ENCODE measurements at regions of chr19 and their contacts with region 1.

Region 1: DNA sequence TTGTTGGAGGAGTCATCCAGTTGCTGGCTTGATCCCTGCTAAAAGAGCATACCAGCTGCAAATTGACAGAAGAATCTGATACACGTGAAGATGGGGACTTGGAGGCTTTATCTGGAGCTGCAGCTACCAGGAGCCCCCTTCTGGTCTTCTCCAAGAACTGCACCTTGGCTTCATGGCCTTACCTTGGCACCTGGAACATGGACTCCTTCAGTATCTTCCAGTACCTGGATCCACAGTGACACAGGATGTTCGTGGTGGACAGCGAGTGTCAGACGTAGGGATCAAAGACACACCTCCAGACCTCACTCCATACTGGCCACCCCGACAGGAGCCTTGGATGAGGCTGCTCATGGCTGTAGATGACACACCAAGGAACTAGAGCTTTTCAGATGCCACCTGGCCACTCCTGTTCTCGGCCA is 9.9 kb upstream of the ACSBG2 start:
- DNase-seq: peak; percentile 40
- ATAC-seq: peak; percentile 95
- H3K4me3 ChIP-seq: no peak overlapping the region
- H3K27ac ChIP-seq: no peak overlapping the region
- H3K4me1 ChIP-seq: peaks cover 6% of the 10 kb centered on the region; the same call in 1 of the 2 replicates
- H3K27me3 ChIP-seq: no peaks in the 10 kb centered on the region
- CTCF ChIP-seq: peak; percentile 95 to 96 (median 95)
- EP300 ChIP-seq: no peak
- POLR2A ChIP-seq: no peak
- RAD21 ChIP-seq: peak; percentile 91

Region 2: GRCh38 chr19:5977785-5978605 is 147.6 kb before region 1 on chr19 and contains the start of gene RANBP3:
- CTCF ChIA-PET with region 1: interaction called, 17 read pairs
- POLR2A ChIA-PET with region 1: no interaction called
- RAD21 ChIA-PET with region 1: interaction called, 3 read pairs
- SMC1A ChIA-PET with region 1: interaction called, 7 read pairs
- in situ Hi-C with region 1: no loop called
- intact Hi-C with region 1: no loop called
- DNase-seq: peak; percentile 96
- ATAC-seq: peak; percentile 94
- H3K4me3 ChIP-seq: peak within 1 kb of the TSS; percentile 96
- H3K27ac ChIP-seq: peak within 1 kb of the TSS; percentile 88
- H3K4me1 ChIP-seq: peaks cover 21% of the 10 kb centered on the region
- H3K27me3 ChIP-seq: no peaks in the 10 kb centered on the region
- CTCF ChIP-seq: no peak
- EP300 ChIP-seq: no peak
- POLR2A ChIP-seq: peak; percentile 88
- RAD21 ChIP-seq: no peak
- polyA plus RNA-seq, gene RANBP3: 1.1 to 1.2 TPM

Region 3: GRCh38 chr19:6038634-6039405 is 86.8 kb before region 1 on chr19:
- CTCF ChIA-PET with region 1: interaction called, 194 read pairs
- POLR2A ChIA-PET with region 1: interaction called, 3 read pairs
- RAD21 ChIA-PET with region 1: interaction called, 5 read pairs
- SMC1A ChIA-PET with region 1: interaction called, 10 read pairs
- in situ Hi-C with region 1: no loop called
- intact Hi-C with region 1: no loop called
- DNase-seq: peak; percentile 82
- ATAC-seq: peak; percentile 97
- H3K4me3 ChIP-seq: no peak overlapping the region; the same call in 1 of the 2 replicates
- H3K27ac ChIP-seq: peak overlapping the region; percentile 67
- H3K4me1 ChIP-seq: peaks cover 19% of the 10 kb centered on the region
- H3K27me3 ChIP-seq: no peaks in the 10 kb centered on the region
- CTCF ChIP-seq: no peak
- EP300 ChIP-seq: peak; percentile 59 to 67; a peak in 2 of 4 replicates
- POLR2A ChIP-seq: no peak
- RAD21 ChIP-seq: no peak

Region 4: DNA sequence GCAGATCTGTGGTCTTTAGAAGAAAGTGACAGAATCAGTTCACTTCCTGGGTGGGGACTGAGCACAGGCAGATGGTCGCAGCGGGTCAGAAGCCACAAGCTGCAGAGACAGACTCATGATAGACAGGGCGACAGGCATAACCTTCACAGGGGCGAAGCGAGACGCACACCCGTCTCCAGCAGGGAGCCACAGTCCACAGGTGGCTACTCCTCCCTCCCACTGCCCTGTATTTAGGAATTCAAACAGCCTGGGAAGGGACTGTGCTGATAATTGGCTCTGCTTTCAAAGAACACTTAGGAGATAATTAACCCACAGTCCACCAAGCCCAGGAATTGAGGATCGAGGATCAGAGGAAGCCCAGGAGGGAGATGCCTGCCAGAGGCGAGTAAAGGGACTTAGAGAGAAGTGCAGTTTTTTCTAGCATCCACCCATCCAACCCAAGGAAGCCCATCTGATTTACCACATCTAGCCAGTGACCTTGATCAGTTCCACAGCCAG is 38.5 kb before region 1 on chr19:
- CTCF ChIA-PET with region 1: interaction called, 13 read pairs
- POLR2A ChIA-PET with region 1: no interaction called
- RAD21 ChIA-PET with region 1: interaction called, 20 read pairs
- SMC1A ChIA-PET with region 1: interaction called, 19 read pairs
- in situ Hi-C with region 1: no loop called
- intact Hi-C with region 1: loop called (anchors 5 kb)
- DNase-seq: peak; percentile 40
- ATAC-seq: peak; percentile 72
- H3K4me3 ChIP-seq: peak overlapping the region; percentile 13; the same call in 1 of the 2 replicates
- H3K27ac ChIP-seq: peak overlapping the region; percentile 17; the same call in 1 of the 2 replicates
- H3K4me1 ChIP-seq: peaks cover 17% of the 10 kb centered on the region
- H3K27me3 ChIP-seq: no peaks in the 10 kb centered on the region
- CTCF ChIP-seq: no peak
- EP300 ChIP-seq: peak in 1 of 2 experiments; percentile 37; a peak in 1 of 4 replicates
- POLR2A ChIP-seq: peak; percentile 63
- RAD21 ChIP-seq: no peak

Region 5: DNA sequence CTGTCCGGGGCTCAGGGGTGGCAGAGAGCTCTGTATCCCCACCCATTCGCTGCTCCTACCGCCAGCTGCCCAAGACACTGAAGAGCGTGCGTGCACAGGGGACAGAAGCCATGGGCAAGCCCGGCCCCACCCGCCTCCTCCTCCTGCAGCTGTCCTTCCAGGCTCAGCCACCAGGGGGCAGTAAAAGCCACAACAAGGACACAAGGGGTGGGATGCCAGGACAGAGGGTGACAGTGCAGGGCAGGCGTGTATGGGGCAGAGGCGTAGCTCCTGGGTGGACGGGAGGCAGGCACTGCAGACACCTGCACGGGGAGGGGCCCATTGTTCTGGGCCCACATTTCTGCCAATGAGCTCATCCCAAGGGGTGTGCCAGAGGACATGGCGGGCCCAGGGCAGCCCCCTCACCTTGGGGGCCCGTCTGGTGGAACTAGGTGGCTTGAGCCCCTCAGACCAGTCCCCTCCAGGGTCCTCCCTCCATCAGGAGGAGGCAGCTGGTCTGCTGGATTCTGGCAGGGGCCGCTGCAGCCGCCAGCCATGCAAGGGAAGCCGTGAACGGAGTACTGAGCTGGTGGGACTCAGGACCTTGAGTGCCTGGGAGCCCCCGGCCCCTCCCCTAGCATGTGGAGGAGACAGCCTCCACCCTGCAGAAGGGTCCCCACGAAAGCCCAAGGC is 93.0 kb after region 1 on chr19:
- CTCF ChIA-PET with region 1: interaction called, 28 read pairs
- POLR2A ChIA-PET with region 1: no interaction called
- RAD21 ChIA-PET with region 1: interaction called, 7 read pairs
- SMC1A ChIA-PET with region 1: interaction called, 11 read pairs
- in situ Hi-C with region 1: no loop called
- intact Hi-C with region 1: no loop called
- DNase-seq: peak; percentile 35
- ATAC-seq: peak; percentile 97
- H3K4me3 ChIP-seq: no peak overlapping the region
- H3K27ac ChIP-seq: no peak overlapping the region
- H3K4me1 ChIP-seq: no peaks in the 10 kb centered on the region
- H3K27me3 ChIP-seq: no peaks in the 10 kb centered on the region
- CTCF ChIP-seq: peak; percentile 92 to 96 (median 94)
- EP300 ChIP-seq: no peak
- POLR2A ChIP-seq: no peak; the same call in 1 of the 2 replicates
- RAD21 ChIP-seq: peak; percentile 95

Region 6: DNA sequence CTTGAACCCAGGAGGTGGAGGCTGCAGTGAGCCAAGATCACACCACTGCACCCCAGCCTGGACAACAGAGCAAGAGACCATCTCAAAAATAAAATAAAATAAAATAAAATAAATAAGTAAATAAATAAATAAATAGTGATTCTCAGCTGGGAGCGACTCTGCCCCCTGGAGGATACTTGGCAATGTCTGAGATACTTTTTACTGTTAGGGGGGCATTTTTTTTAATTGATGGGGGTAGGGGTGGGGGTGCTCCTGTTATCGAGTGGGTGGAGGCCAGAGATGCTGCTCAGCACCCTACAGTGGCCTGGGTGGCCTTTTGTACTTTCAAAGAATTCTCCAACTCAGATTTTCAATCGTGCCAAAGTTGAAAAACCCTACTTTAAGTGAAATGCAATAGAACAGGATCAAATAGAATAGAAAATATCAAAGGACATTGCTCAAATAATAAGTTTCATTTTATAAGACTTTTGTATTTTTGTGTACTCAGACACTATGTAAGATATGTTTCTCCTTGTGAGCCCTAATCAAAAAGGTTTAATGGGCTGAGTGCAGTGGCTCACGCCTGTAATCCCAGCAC is 228.6 kb after region 1 on chr19:
- CTCF ChIA-PET with region 1: interaction called, 19 read pairs
- POLR2A ChIA-PET with region 1: no interaction called
- RAD21 ChIA-PET with region 1: interaction called, 3 read pairs
- SMC1A ChIA-PET with region 1: interaction called, 7 read pairs
- in situ Hi-C with region 1: no loop called
- intact Hi-C with region 1: no loop called
- DNase-seq: no peak
- ATAC-seq: no peak
- H3K4me3 ChIP-seq: no peak overlapping the region
- H3K27ac ChIP-seq: no peak overlapping the region
- H3K4me1 ChIP-seq: no peaks in the 10 kb centered on the region
- H3K27me3 ChIP-seq: no peaks in the 10 kb centered on the region
- CTCF ChIP-seq: peak in 1 of 3 experiments; percentile 18; a peak in 2 of 6 replicates
- EP300 ChIP-seq: no peak
- POLR2A ChIP-seq: no peak
- RAD21 ChIP-seq: peak; percentile 30

Measured in GM12878 (cell line).